A673 (cell line): ENCODE measurements at regions of chr5 and their contacts with region 1.

Region 1: GRCh38 chr5:78886341-78887230 is 98.5 kb downstream of the ARSB start:
- DNase-seq: peak; percentile 22
- H3K4me3 ChIP-seq: no peak overlapping the region
- H3K27ac ChIP-seq: no peak overlapping the region
- H3K4me1 ChIP-seq: no peaks in the 10 kb centered on the region
- H3K27me3 ChIP-seq: no peaks in the 10 kb centered on the region
- CTCF ChIP-seq: peak; percentile 74

Region 2: GRCh38 chr5:78472469-78473106 is 414.0 kb before region 1 on chr5:
- CTCF ChIA-PET with region 1: interaction called, 3 read pairs
- POLR2A ChIA-PET with region 1: no interaction called
- intact Hi-C with region 1: loop called (anchors 10 kb)
- DNase-seq: peak; percentile 54
- H3K4me3 ChIP-seq: no peak overlapping the region
- H3K27ac ChIP-seq: no peak overlapping the region
- H3K4me1 ChIP-seq: no peaks in the 10 kb centered on the region
- H3K27me3 ChIP-seq: no peaks in the 10 kb centered on the region
- CTCF ChIP-seq: peak; percentile 45; the same call in 1 of the 2 replicates

Region 3: DNA sequence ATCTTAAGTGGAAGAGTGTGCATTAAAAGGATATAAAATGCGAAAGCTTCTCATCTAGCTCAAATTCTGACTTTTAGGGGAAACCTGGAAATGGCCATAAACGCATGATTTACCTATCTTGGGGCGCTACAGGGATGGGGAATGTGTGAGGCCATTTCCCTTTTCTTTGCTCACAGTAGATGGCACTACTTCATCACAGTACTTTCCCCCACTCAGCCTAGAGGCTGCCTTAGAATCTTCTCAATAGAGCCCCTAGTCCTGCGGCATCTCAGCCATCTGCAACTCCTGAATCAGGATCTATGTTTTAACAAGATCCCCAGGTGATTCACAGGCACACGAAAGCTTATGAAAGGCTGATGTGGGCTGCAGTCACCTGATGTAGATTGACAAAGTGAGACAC is 348.8 kb before region 1 on chr5:
- CTCF ChIA-PET with region 1: no interaction called
- POLR2A ChIA-PET with region 1: no interaction called
- intact Hi-C with region 1: loop called (anchors 2 kb)
- DNase-seq: peak; percentile 39
- H3K4me3 ChIP-seq: no peak overlapping the region
- H3K27ac ChIP-seq: no peak overlapping the region
- H3K4me1 ChIP-seq: no peaks in the 10 kb centered on the region
- H3K27me3 ChIP-seq: no peaks in the 10 kb centered on the region
- CTCF ChIP-seq: peak; percentile 45